Activated T-helper 1 cell treated with anti-CD3 and anti-CD28 coated beads, Interleukin-12 subunit alpha, Interleukin-12 subunit beta, Interleukin-2, Interleukin-4 antibody, amounts not matched to agents 30 ng/mL and 10 ng/mL and 1 ng/mL, durations not matched to agents 14 hours and 24 hours and 36 hours (primary cell): ENCODE measurements at regions of chr5 and their contacts with region 1.

Region 1: DNA sequence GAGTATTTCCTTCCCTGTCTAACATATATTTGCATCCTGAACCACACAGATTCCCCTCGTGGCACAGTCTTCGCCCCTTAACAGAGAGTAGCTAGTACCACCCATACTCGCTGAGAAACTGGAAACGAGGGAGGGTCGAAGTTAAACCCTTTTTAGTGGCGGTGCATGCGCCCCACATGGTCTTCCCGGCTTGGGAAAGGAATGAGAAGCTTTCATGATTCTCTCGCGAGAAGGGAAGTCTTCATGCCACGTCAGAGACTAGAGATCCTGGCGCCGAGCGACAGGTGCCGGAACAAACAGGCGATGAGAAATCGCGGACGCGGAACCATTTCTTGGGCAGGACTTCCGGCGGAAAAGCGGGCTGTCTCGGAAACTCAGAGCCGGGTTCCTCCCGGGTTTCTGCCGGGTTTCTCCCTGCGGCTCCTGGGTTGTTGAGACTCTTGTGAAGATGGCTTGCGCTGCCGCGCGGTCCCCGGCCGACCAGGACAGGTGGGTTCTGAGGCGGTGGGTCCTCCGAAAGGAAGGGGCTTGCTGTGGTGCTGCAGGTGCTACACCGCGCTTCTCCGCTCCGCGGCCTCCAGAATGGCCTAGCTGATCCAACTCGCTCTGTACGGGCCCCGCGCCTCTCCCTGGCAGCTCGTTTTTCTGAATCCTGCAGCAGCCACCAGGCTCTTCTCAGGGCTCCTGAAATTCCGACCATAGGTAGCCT is at the start of gene SRP19:
- DNase-seq: peak; percentile 89
- H3K4me3 Mint-ChIP-seq: peak within 1 kb of the TSS; percentile 97
- H3K27ac Mint-ChIP-seq: peak within 1 kb of the TSS; percentile 96
- H3K4me1 Mint-ChIP-seq: peaks cover 27% of the 10 kb centered on the region
- H3K27me3 Mint-ChIP-seq: peaks cover 12% of the 10 kb centered on the region
- total RNA-seq, gene SRP19: 72.0 and 72.5 TPM in 2 replicates

Region 2: DNA sequence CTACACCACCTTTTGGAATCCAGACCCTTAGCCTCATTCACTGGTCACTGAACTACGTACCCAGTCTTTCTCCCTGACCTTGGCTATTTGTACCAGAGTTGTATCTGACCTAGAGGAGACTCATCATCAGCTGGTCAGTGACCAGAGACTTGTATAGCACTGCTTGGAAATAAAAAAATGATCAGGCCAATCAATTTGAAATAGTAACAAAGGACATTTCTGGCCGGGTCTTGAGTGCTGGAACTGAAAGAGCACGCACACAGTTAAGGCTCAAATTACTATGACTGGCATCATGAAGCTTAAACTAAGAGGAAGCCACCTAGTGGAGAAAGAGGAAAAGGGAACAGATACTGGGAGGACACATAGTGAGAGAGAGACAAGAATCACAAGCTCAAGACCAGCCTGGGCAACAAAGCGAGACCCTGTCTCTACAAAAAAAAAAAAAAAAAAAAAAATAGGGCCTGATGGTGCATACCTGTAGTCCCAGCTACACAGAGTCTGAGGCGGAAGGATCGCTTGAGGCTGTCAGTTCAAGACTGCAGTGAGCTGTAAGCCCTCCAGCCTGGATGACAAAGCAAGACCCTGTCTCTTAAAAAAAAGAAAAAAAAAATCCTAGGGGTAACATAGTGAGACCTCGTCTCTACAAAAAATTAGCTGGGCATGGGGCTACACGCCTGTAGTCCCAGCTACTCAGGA is 12.8 kb before region 1 on chr5:
- intact Hi-C with region 1: no loop called
- DNase-seq: peak; percentile 4
- H3K4me3 Mint-ChIP-seq: no peak overlapping the region
- H3K27ac Mint-ChIP-seq: no peak overlapping the region
- H3K4me1 Mint-ChIP-seq: peaks cover 5% of the 10 kb centered on the region
- H3K27me3 Mint-ChIP-seq: peaks cover 10% of the 10 kb centered on the region

Region 3: DNA sequence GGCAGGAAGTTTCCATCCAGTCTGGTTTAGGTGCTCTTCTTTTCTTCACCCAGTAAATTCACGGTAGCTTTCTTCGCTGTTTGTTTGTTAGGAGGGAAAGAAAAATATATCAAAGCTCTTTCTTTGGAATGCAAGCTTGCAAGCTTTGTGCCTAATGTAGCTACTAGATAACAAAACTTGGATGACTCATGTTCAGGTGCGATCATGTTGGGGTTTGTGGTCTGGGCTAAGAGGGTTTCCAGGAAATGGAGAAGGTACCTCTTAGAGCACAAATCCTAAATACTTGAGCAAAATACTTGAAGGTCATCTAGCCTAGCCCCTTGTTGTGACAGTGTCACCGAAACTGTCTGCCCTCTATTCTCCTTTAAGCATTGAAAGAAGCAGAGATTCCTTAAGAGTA is 17.7 kb after region 1 on chr5:
- intact Hi-C with region 1: loop called (anchors 2 kb)
- DNase-seq: peak; percentile 62
- H3K4me3 Mint-ChIP-seq: peak overlapping the region; percentile 31
- H3K27ac Mint-ChIP-seq: peak overlapping the region; percentile 54
- H3K4me1 Mint-ChIP-seq: peaks cover 42% of the 10 kb centered on the region
- H3K27me3 Mint-ChIP-seq: no peaks in the 10 kb centered on the region

Region 4: GRCh38 chr5:112951124-112951702 is 90.1 kb after region 1 on chr5:
- intact Hi-C with region 1: no loop called
- DNase-seq: no peak
- H3K4me3 Mint-ChIP-seq: no peak overlapping the region
- H3K27ac Mint-ChIP-seq: no peak overlapping the region
- H3K4me1 Mint-ChIP-seq: peaks cover 6% of the 10 kb centered on the region
- H3K27me3 Mint-ChIP-seq: peaks cover 9% of the 10 kb centered on the region

Region 5: GRCh38 chr5:113294311-113295110 is 433.4 kb after region 1 on chr5:
- intact Hi-C with region 1: loop called (anchors 10 kb)
- DNase-seq: peak; percentile 62
- H3K4me3 Mint-ChIP-seq: peak overlapping the region; percentile 89
- H3K27ac Mint-ChIP-seq: peak overlapping the region; percentile 8
- H3K4me1 Mint-ChIP-seq: peaks cover 18% of the 10 kb centered on the region
- H3K27me3 Mint-ChIP-seq: peaks cover 69% of the 10 kb centered on the region

Region 6: DNA sequence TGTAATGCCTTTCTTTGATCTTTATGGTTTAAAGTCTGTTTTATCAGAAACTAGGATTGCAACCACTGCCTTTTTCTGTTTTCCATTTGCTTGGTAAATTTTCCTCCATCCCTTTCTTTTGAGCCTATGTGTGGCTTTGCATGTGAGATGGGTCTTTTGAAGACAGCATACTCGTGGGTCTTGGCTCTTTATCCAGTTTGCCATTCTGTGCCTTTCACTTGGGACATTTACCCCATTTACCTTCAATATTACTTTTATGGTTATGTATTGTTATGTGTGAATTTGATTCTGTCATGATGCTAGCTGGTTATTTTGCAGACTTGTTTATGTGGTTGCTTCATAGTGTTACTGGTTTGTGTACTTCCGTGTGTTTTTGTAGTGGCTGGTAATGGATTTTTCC is 711.6 kb after region 1 on chr5:
- intact Hi-C with region 1: no loop called
- DNase-seq: no peak
- H3K4me3 Mint-ChIP-seq: no peak overlapping the region
- H3K27ac Mint-ChIP-seq: no peak overlapping the region
- H3K4me1 Mint-ChIP-seq: peaks cover 12% of the 10 kb centered on the region
- H3K27me3 Mint-ChIP-seq: no peaks in the 10 kb centered on the region